ENCODE measurements at regions of chr2 and their contacts with region 1.

Region 1: DNA sequence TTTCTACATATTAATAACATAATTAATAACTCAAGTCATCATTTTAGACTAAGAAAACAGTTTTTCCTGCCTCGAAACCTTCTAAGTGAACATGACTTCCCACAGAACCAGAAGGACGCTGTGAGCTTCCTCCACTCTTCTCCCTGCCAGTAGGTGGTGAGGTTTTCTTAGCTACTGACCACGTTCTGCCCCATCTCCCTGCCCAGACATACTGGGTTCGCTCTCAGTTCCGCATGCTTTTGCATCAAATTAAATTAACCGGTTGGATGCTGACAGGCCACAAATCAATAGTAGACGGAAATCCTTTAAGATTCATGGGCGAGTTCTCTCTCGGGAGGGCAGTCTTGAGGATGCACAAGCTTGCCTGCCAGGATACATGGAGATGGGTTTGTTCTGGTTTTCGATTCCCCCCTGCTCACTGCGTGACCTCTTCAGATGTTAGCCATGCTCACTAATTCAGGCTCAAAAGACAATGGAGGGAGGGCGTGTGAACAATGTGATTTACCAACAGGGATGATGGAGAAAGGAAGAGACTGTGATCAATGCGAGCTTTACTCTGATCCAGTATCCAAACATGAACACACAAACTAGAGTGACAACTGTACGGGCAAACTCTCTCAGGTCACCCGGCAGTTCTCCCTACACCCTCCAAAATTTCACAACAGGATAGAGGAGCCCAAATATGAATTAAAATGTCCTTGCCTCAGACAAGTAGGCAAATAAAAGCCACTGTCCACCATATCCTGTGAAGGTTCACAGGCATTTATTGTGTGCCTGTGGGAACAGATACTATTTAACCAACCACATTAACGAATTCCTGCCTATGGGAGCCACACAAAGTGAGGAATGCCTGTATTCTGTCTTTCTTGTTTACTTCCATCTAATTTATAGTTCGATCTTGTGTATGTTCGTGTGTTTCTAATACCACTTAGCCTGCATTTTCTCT is 375.7 kb downstream of the EIPR1 start:
- DNase-seq: no peak
- H3K4me3 ChIP-seq: no peak overlapping the region
- H3K27ac ChIP-seq: no peak overlapping the region
- H3K4me1 ChIP-seq: no peaks in the 10 kb centered on the region
- H3K27me3 ChIP-seq: peaks cover 77% of the 10 kb centered on the region
- CTCF ChIP-seq: peak; percentile 60

Region 2: GRCh38 chr2:2707206-2707991 is 294.5 kb before region 1 on chr2:
- intact Hi-C with region 1: no loop called
- DNase-seq: no peak
- H3K4me3 ChIP-seq: no peak overlapping the region
- H3K27ac ChIP-seq: no peak overlapping the region
- H3K4me1 ChIP-seq: no peaks in the 10 kb centered on the region
- H3K27me3 ChIP-seq: peaks cover 93% of the 10 kb centered on the region
- CTCF ChIP-seq: no peak

Region 3: GRCh38 chr2:3198119-3198518 is 196.2 kb after region 1 on chr2:
- intact Hi-C with region 1: no loop called
- DNase-seq: no peak
- H3K4me3 ChIP-seq: no peak overlapping the region
- H3K27ac ChIP-seq: no peak overlapping the region
- H3K4me1 ChIP-seq: peaks cover 10% of the 10 kb centered on the region
- H3K27me3 ChIP-seq: no peaks in the 10 kb centered on the region
- CTCF ChIP-seq: no peak

Region 4: GRCh38 chr2:3290655-3291054 is 288.8 kb after region 1 on chr2:
- intact Hi-C with region 1: loop called (anchors 10 kb)
- DNase-seq: no peak
- H3K4me3 ChIP-seq: no peak overlapping the region
- H3K27ac ChIP-seq: no peak overlapping the region
- H3K4me1 ChIP-seq: no peaks in the 10 kb centered on the region
- H3K27me3 ChIP-seq: no peaks in the 10 kb centered on the region
- CTCF ChIP-seq: no peak